ENCODE measurements at regions of chr7 and their contacts with region 1.

Region 1: GRCh38 chr7:143008007-143008901 is 18.7 kb downstream of the OR9A2 start:
- DNase-seq: peak; percentile 70 to 89 (median 83)
- ATAC-seq: peak; percentile 98
- H3K4me3 ChIP-seq: no peak overlapping the region
- H3K4me3 Mint-ChIP-seq: no peak overlapping the region
- H3K27ac ChIP-seq: no peak overlapping the region
- H3K27ac Mint-ChIP-seq: no peak overlapping the region
- H3K4me1 ChIP-seq: no peaks in the 10 kb centered on the region
- H3K4me1 Mint-ChIP-seq: peaks cover 4% of the 10 kb centered on the region
- H3K27me3 ChIP-seq: peaks cover 0 to 2% of the 10 kb centered on the region in 2 experiments
- H3K27me3 Mint-ChIP-seq: peaks cover 8% of the 10 kb centered on the region
- CTCF ChIP-seq: peak; percentile 93

Region 2: GRCh38 chr7:142301923-142302550 is 706.2 kb before region 1 on chr7:
- CTCF ChIA-PET with region 1: interaction called, 16 read pairs
- POLR2A ChIA-PET with region 1: no interaction called
- intact Hi-C with region 1: loop called in 1 of 2 experiments (anchors 1 kb)
- DNase-seq: peak in 2 of 9 experiments; percentile 26 to 33
- ATAC-seq: no peak
- H3K4me3 ChIP-seq: no peak overlapping the region
- H3K4me3 Mint-ChIP-seq: no peak overlapping the region
- H3K27ac ChIP-seq: no peak overlapping the region
- H3K27ac Mint-ChIP-seq: no peak overlapping the region
- H3K4me1 ChIP-seq: peaks cover 16% of the 10 kb centered on the region
- H3K4me1 Mint-ChIP-seq: peaks cover 38% of the 10 kb centered on the region
- H3K27me3 ChIP-seq: peaks cover 0 to 4% of the 10 kb centered on the region in 2 experiments
- H3K27me3 Mint-ChIP-seq: peaks cover 16% of the 10 kb centered on the region
- CTCF ChIP-seq: peak; percentile 38

Region 3: GRCh38 chr7:142438235-142438922 is 569.9 kb before region 1 on chr7:
- CTCF ChIA-PET with region 1: no interaction called
- POLR2A ChIA-PET with region 1: no interaction called
- intact Hi-C with region 1: loop called in 1 of 2 experiments (anchors 10 kb)
- DNase-seq: peak in 2 of 9 experiments; percentile 44 to 58
- ATAC-seq: no peak
- H3K4me3 ChIP-seq: no peak overlapping the region
- H3K4me3 Mint-ChIP-seq: no peak overlapping the region
- H3K27ac ChIP-seq: no peak overlapping the region
- H3K27ac Mint-ChIP-seq: no peak overlapping the region
- H3K4me1 ChIP-seq: peaks cover 12% of the 10 kb centered on the region
- H3K4me1 Mint-ChIP-seq: peaks cover 50% of the 10 kb centered on the region
- H3K27me3 ChIP-seq: no peaks in the 10 kb centered on the region
- H3K27me3 Mint-ChIP-seq: no peaks in the 10 kb centered on the region
- CTCF ChIP-seq: peak; percentile 42

Region 4: DNA sequence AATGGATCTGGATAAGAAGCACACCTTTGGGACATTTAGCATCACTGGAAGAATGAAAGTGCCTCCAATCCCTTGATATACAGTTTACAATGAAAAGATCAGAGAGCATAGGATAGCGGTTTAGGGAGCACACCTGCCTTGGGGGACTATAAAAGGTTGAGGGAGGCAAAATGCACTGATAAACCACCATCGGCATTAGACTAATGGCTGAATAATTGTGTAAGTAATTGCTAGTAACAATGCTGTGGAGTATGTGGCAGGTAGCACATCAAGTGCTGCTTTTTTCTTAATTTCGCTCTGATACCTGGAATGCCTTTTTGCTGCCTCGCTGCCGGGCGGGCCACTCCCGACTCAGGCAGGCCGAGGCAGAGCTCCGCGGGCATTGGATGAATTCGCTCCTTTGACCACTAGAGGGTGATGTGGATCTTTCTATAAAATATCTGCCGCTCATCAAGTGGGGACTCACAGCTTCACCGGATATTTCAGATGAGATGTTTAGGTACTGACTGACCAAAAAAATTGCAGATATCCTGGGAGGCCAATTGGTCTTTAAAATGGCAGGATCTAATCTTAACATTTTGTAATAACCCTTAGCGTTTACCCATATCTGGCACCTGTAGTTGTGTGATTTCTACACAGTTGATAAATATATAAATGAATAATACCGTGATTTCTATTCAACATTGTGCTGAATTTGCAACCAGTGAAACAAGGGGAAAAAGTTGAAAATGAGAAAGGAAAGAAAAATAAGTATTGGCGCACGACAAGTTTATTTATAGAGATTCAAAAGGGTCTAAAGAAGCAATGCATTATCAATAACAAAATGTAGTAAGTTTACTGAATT is 375.7 kb before region 1 on chr7:
- CTCF ChIA-PET with region 1: interaction called, 3 read pairs
- POLR2A ChIA-PET with region 1: no interaction called
- intact Hi-C with region 1: loop called in 1 of 2 experiments (anchors 2 kb)
- DNase-seq: peak; percentile 10 to 82 (median 49)
- ATAC-seq: peak; percentile 51
- H3K4me3 ChIP-seq: no peak overlapping the region
- H3K4me3 Mint-ChIP-seq: no peak overlapping the region
- H3K27ac ChIP-seq: no peak overlapping the region
- H3K27ac Mint-ChIP-seq: peak overlapping the region; percentile 18
- H3K4me1 ChIP-seq: no peaks in the 10 kb centered on the region
- H3K4me1 Mint-ChIP-seq: peaks cover 13% of the 10 kb centered on the region
- H3K27me3 ChIP-seq: no peaks in the 10 kb centered on the region
- H3K27me3 Mint-ChIP-seq: peaks cover 2% of the 10 kb centered on the region
- CTCF ChIP-seq: peak; percentile 58

Region 5: GRCh38 chr7:142932386-142933091 is 75.7 kb before region 1 on chr7:
- CTCF ChIA-PET with region 1: no interaction called
- POLR2A ChIA-PET with region 1: no interaction called
- intact Hi-C with region 1: no loop called
- DNase-seq: no peak
- ATAC-seq: no peak
- H3K4me3 ChIP-seq: no peak overlapping the region
- H3K4me3 Mint-ChIP-seq: no peak overlapping the region
- H3K27ac ChIP-seq: no peak overlapping the region
- H3K27ac Mint-ChIP-seq: no peak overlapping the region
- H3K4me1 ChIP-seq: no peaks in the 10 kb centered on the region
- H3K4me1 Mint-ChIP-seq: no peaks in the 10 kb centered on the region
- H3K27me3 ChIP-seq: no peaks in the 10 kb centered on the region
- H3K27me3 Mint-ChIP-seq: peaks cover 7% of the 10 kb centered on the region
- CTCF ChIP-seq: no peak

Region 6: DNA sequence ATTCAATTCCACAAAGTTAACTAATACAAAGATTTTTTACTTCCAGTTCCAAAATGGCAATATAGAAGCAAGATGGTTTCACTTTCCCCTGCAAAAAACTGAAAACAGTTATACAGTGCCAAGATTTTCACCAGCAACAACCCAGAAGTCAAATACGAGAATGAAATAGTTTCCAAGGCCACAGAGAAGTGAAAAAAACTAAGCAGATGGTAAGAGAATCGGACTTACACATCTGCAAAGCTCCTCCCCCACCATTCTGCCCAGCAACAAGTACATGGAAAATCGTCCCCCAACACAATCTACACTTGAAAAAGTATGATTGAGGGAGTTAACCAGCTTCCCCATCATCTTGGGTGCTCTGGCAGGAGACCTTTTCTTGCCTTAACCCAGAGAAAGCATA is 15.8 kb before region 1 on chr7:
- CTCF ChIA-PET with region 1: interaction called, 25 read pairs
- POLR2A ChIA-PET with region 1: no interaction called
- intact Hi-C with region 1: no loop called
- DNase-seq: no peak
- ATAC-seq: no peak
- H3K4me3 ChIP-seq: no peak overlapping the region
- H3K4me3 Mint-ChIP-seq: no peak overlapping the region
- H3K27ac ChIP-seq: no peak overlapping the region
- H3K27ac Mint-ChIP-seq: no peak overlapping the region
- H3K4me1 ChIP-seq: no peaks in the 10 kb centered on the region
- H3K4me1 Mint-ChIP-seq: no peaks in the 10 kb centered on the region
- H3K27me3 ChIP-seq: peaks cover 0 to 3% of the 10 kb centered on the region in 2 experiments
- H3K27me3 Mint-ChIP-seq: peaks cover 13% of the 10 kb centered on the region
- CTCF ChIP-seq: no peak

Region 7: DNA sequence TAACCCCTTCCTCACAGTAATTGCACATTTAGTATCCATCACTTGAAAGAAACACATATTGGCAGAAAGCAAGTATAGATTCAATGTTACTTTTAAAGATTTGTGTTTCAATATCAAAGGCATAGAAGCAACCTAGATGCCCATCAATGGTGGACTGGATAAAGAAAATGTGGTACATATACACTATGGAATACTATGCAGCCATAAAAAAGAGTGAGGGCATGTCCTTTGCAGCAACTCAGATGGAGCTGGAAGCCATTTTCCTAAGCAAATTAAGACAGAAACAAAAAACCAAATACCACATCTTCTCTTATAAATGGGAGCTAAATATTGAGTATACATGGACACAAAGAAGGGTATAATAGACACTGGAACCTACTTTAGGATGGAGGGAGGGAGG is 47.5 kb after region 1 on chr7:
- CTCF ChIA-PET with region 1: no interaction called
- POLR2A ChIA-PET with region 1: no interaction called
- intact Hi-C with region 1: no loop called
- DNase-seq: no peak
- ATAC-seq: no peak
- H3K4me3 ChIP-seq: no peak overlapping the region
- H3K4me3 Mint-ChIP-seq: no peak overlapping the region
- H3K27ac ChIP-seq: no peak overlapping the region
- H3K27ac Mint-ChIP-seq: no peak overlapping the region
- H3K4me1 ChIP-seq: no peaks in the 10 kb centered on the region
- H3K4me1 Mint-ChIP-seq: no peaks in the 10 kb centered on the region
- H3K27me3 ChIP-seq: no peaks in the 10 kb centered on the region
- H3K27me3 Mint-ChIP-seq: peaks cover 4% of the 10 kb centered on the region
- CTCF ChIP-seq: no peak

Region 8: GRCh38 chr7:143305423-143306070 is 297.3 kb after region 1 on chr7:
- CTCF ChIA-PET with region 1: no interaction called
- POLR2A ChIA-PET with region 1: no interaction called
- intact Hi-C with region 1: loop called (anchors 2 to 10 kb)
- DNase-seq: peak; percentile 38 to 78 (median 71)
- ATAC-seq: peak; percentile 77
- H3K4me3 ChIP-seq: no peak overlapping the region
- H3K4me3 Mint-ChIP-seq: no peak overlapping the region
- H3K27ac ChIP-seq: no peak overlapping the region
- H3K27ac Mint-ChIP-seq: peak overlapping the region; percentile 39
- H3K4me1 ChIP-seq: peaks cover 3% of the 10 kb centered on the region
- H3K4me1 Mint-ChIP-seq: peaks cover 22% of the 10 kb centered on the region
- H3K27me3 ChIP-seq: no peaks in the 10 kb centered on the region
- H3K27me3 Mint-ChIP-seq: no peaks in the 10 kb centered on the region
- CTCF ChIP-seq: peak; percentile 58

Region 9: DNA sequence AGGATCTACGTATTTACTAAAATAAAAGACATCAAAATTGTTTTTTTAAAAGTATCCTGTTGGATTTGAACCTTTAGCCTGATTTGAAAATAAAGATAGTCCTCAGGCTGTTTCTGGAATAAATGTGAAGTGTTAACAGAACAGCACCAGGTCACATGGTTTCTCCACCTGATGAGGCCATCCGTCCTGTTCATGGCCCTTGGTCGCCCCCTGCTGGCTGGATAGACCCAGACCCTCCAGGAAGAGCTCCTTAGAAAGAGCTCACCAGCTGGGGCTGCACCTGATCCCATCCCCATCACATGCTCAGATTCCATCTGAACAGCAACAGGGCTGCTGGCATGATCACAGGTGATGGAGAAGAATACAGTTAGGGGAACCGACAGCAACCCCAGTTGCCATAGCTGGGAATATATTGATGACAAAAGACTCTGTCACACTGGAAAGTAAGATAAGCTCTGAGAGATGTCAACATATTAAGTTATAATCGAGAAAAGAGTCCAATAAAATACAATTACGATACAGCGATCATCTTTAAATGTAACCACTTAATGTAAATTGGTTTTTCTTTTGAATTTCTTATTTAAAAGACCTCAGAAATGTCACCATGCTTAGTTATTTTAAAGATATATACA is 1119.6 kb after region 1 on chr7:
- CTCF ChIA-PET with region 1: no interaction called
- POLR2A ChIA-PET with region 1: no interaction called
- intact Hi-C with region 1: loop called in 1 of 2 experiments (anchors 5 kb)
- DNase-seq: peak; percentile 69 to 90 (median 84)
- ATAC-seq: peak; percentile 98
- H3K4me3 ChIP-seq: no peak overlapping the region
- H3K4me3 Mint-ChIP-seq: no peak overlapping the region
- H3K27ac ChIP-seq: no peak overlapping the region
- H3K27ac Mint-ChIP-seq: no peak overlapping the region
- H3K4me1 ChIP-seq: no peaks in the 10 kb centered on the region
- H3K4me1 Mint-ChIP-seq: no peaks in the 10 kb centered on the region
- H3K27me3 ChIP-seq: no peaks in the 10 kb centered on the region
- H3K27me3 Mint-ChIP-seq: no peaks in the 10 kb centered on the region
- CTCF ChIP-seq: peak; percentile 85